ENCODE measurements at regions of chr1 and their contacts with region 1.

Region 1: DNA sequence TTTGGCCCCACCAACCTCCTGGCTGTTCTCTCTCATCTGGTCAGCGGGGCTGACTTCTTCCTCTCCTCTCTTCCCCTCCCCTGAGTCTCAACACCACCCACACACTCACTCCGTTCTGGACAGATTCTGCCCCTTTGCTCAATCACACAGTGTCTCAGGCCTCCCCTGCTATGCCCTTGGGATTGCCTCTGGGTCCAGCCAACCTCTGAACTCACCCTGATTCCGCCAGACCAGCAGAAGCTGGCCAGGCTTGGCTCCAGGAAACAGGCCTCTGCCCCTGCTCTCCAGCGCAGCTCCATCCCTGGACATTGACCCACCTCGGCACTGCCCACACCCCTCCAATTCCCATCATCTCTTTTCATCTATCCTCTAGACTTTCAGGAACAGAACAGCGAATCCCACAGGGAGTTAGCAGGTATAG is 22.1 kb downstream of the AHDC1 start:
- DNase-seq: no peak
- H3K4me3 ChIP-seq: no peak overlapping the region
- H3K4me3 Mint-ChIP-seq: no peak overlapping the region
- H3K27ac ChIP-seq: no peak overlapping the region
- H3K27ac Mint-ChIP-seq: peak overlapping the region in 2 of 8 donors; percentile 19 to 31
- H3K4me1 ChIP-seq: no peaks in the 10 kb centered on the region
- H3K4me1 Mint-ChIP-seq: peaks cover 3 to 8% (median 7%) of the 10 kb centered on the region in 3 donors
- H3K27me3 ChIP-seq: no peaks in the 10 kb centered on the region
- H3K27me3 Mint-ChIP-seq: no peaks in the 10 kb centered on the region

Region 2: GRCh38 chr1:27568300-27569087 is 13.3 kb before region 1 on chr1:
- CTCF ChIA-PET with region 1: interaction called, 12 read pairs
- POLR2A ChIA-PET with region 1: no interaction called
- DNase-seq: peak; percentile 91 to 94 (median 92)
- H3K4me3 ChIP-seq: peak overlapping the region; percentile 30
- H3K4me3 Mint-ChIP-seq: peak overlapping the region; percentile 8 to 83 (median 78)
- H3K27ac ChIP-seq: no peak overlapping the region
- H3K27ac Mint-ChIP-seq: peak overlapping the region; percentile 57 to 97 (median 92)
- H3K4me1 ChIP-seq: peaks cover 38% of the 10 kb centered on the region
- H3K4me1 Mint-ChIP-seq: peaks cover 25 to 33% (median 26%) of the 10 kb centered on the region in 3 donors
- H3K27me3 ChIP-seq: no peaks in the 10 kb centered on the region
- H3K27me3 Mint-ChIP-seq: no peaks in the 10 kb centered on the region

Region 3: DNA sequence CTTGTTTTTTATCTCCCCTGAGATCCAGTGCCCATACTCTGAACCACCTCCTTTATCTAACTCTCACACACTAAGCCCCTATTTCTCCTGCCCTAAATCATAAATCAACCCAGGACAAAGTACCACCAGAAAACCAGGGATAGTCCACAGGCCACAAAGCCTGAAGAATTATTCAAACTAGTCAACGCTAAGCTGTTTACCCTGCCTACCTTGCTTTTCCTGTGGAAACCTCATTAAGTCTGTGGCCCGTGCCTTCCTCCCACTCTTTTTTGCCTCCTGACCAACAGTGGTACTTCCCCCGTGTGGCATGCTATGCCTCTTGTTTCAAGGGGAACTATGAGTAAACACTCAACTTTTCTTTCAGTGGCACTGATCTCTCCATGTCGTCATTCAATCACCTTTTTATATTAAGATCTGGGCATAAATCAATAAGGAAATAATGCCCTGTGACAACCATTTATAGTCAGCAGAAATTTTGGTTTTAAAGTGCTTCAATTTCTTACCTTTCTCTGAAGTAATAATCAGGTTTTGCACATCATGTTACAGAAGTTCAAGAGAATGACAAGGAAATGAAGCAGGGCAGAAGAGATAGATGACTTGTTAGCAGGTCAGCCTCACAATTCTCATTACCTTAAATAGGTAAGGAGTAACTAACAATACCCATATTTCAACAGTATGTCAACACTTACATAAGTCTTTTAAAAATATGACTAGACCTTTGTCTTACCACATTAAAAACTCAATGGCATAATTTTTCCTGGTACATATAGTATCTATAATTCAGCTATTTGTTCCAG is 474.5 kb after region 1 on chr1:
- CTCF ChIA-PET with region 1: no interaction called
- POLR2A ChIA-PET with region 1: no interaction called
- DNase-seq: peak; percentile 13 to 72 (median 34)
- H3K4me3 ChIP-seq: no peak overlapping the region
- H3K4me3 Mint-ChIP-seq: peak overlapping the region in 6 of 7 donors; percentile 8 to 70 (median 56)
- H3K27ac ChIP-seq: peak overlapping the region; percentile 5
- H3K27ac Mint-ChIP-seq: peak overlapping the region; percentile 74 to 96 (median 86)
- H3K4me1 ChIP-seq: peaks cover 29% of the 10 kb centered on the region
- H3K4me1 Mint-ChIP-seq: peaks cover 46 to 67% (median 67%) of the 10 kb centered on the region in 3 donors
- H3K27me3 ChIP-seq: no peaks in the 10 kb centered on the region
- H3K27me3 Mint-ChIP-seq: no peaks in the 10 kb centered on the region